Sigmoid colon (tissue), 7 donors: ENCODE measurements at regions of chr22 and their contacts with region 1.

Region 1: DNA sequence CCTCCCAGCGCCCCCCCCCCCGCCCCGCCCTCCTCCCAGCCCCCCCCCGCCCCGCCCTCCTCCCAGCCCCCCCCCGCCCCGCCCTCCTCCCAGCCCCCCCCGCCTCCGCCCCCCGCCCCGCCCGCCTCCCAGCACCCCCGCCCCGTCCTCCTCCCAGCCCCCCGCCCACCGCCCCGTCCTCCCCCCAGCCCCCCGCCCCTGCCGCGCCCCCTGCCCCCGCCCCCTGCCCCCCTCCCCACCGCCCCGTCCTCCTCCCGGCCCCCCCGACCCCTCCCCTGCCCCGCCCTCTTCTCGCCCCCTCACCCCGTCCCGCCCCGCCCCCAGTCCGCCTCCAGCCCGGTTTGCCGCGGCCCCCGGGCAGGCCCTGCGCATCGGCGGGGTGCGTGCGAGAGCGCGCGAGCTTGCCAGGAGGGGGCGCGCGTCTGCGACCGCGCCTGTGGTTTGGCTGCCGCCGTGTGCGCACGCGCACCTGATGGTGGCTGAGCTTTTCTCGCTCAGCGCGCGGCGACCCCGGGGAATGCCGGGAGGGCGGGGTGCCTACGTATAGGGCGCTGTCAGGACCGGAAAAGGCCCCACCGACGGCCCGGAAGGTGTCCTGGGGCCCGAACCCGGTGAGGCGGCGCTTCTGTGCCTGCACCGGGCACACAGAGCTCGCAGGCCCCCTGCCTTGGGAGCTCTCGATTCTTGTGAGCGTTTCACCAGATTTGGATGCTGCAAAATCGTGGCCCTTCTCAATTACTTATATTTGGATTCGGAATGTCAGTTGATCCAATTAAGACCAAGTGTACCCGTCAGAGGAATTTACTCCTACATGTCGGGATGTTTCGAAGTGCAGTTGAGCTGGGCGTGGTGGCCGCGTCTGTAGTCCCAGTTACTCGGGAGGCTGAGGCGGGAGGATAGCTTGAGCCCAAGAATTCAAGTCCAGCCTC is 501 bp upstream of the TTLL12 start:
- DNase-seq: peak; percentile 97
- H3K4me3 ChIP-seq: peak overlapping the region; percentile 24 to 86 (median 76)
- H3K27ac ChIP-seq: peak overlapping the region; percentile 84 to 93 (median 86)
- H3K4me1 ChIP-seq: peaks cover 0 to 23% (median 16%) of the 10 kb centered on the region in 4 donors
- H3K27me3 ChIP-seq: no peaks in the 10 kb centered on the region
- CTCF ChIP-seq: peak in 2 of 4 experiments; percentile 25 to 67
- EP300 ChIP-seq: peak in 1 of 4 donors; percentile 51
- POLR2A ChIP-seq: peak in 1 of 2 donors; percentile 47

Region 2: GRCh38 chr22:43151251-43152002 is 36.0 kb before region 1 on chr22 and contains the start of gene TSPO:
- intact Hi-C with region 1: loop called (anchors 2 kb)
- DNase-seq: peak; percentile 90
- H3K4me3 ChIP-seq: peak within 1 kb of the TSS; percentile 66 to 87 (median 84)
- H3K27ac ChIP-seq: peak within 1 kb of the TSS; percentile 79 to 87 (median 84)
- H3K4me1 ChIP-seq: peaks cover 0 to 29% (median 23%) of the 10 kb centered on the region in 4 donors
- H3K27me3 ChIP-seq: no peaks in the 10 kb centered on the region
- CTCF ChIP-seq: no peak
- EP300 ChIP-seq: no peak
- POLR2A ChIP-seq: peak in 1 of 2 donors; percentile 45
- total RNA-seq, gene TSPO: 126 to 219 (median 157) TPM